CD8-positive, alpha-beta T cell (primary cell): ENCODE measurements at regions of chr4 and their contacts with region 1.

Region 1: GRCh38 chr4:87465739-87466366 is 43.5 kb downstream of the NUDT9 start:
- DNase-seq: peak in 3 of 9 experiments; percentile 7 to 69 (median 58)
- ATAC-seq: peak; percentile 48
- H3K4me3 ChIP-seq: no peak overlapping the region
- H3K4me3 Mint-ChIP-seq: no peak overlapping the region
- H3K27ac ChIP-seq: no peak overlapping the region
- H3K27ac Mint-ChIP-seq: no peak overlapping the region
- H3K4me1 ChIP-seq: no peaks in the 10 kb centered on the region
- H3K4me1 Mint-ChIP-seq: no peaks in the 10 kb centered on the region
- H3K27me3 ChIP-seq: no peaks in the 10 kb centered on the region
- H3K27me3 Mint-ChIP-seq: no peaks in the 10 kb centered on the region
- CTCF ChIP-seq: peak; percentile 82

Region 2: DNA sequence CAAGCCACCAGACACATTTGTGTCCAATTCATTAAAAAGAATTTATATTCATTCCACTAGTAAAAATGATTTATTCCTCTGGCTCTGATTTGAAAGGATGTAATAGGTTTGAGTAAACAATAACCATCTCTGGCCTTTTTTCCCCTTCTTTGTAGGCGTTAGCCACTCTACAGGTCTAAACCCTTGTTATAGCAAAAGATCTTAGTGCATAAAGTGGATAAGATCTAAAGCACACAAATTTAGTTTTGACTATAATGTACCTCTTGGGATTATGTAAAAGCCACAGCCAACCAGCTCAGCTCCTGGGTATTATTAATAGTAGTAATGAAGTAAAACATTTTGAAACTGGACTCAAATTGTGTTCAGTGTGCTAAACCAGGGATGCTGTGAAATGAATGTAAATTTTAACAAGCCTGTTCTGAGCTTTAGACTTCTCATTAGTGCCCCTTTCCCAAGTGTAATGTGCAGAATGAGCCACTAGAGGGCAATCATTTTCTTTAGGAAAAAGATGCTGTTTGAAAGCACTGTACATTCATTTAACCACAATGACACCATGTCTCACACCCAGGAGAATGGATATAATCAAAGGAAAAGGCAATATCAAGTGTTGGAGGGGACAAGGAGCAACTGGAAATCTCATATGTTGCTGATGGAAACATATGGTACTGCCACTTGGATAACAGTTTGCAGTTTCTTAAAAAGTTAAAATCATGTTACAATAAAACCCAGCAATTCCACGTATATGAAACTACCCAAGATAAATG is 315.2 kb before region 1 on chr4:
- CTCF ChIA-PET with region 1: interaction called, 6 read pairs
- POLR2A ChIA-PET with region 1: no interaction called
- intact Hi-C with region 1: loop called (anchors 1 to 2 kb)
- DNase-seq: peak in 8 of 9 experiments; percentile 17 to 78 (median 40)
- ATAC-seq: peak; percentile 84
- H3K4me3 ChIP-seq: no peak overlapping the region
- H3K4me3 Mint-ChIP-seq: no peak overlapping the region
- H3K27ac ChIP-seq: no peak overlapping the region
- H3K27ac Mint-ChIP-seq: no peak overlapping the region
- H3K4me1 ChIP-seq: no peaks in the 10 kb centered on the region
- H3K4me1 Mint-ChIP-seq: no peaks in the 10 kb centered on the region
- H3K27me3 ChIP-seq: no peaks in the 10 kb centered on the region
- H3K27me3 Mint-ChIP-seq: no peaks in the 10 kb centered on the region
- CTCF ChIP-seq: peak; percentile 91

Region 3: DNA sequence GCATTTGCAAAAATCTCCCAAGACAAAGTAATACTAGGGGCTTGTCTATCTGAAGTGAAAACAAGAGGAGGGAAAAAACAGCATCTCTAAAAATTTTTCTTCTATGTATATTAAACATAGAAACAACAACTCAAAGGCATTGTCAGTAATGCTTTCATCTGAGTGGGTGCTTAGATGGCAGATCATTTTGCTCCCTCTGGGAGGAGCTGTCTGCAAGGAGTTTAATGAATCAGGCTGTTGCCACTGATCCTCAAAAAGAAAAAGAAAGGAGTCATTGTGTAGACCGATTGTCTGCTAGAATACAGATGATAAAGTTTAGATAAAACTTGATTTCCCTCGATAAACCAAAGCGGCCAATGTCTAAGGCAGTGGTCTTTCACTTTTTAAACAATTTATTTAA is 195.7 kb before region 1 on chr4:
- CTCF ChIA-PET with region 1: interaction called, 6 read pairs
- POLR2A ChIA-PET with region 1: no interaction called
- intact Hi-C with region 1: loop called (anchors 1 to 5 kb)
- DNase-seq: peak in 2 of 9 experiments; percentile 3 to 20
- ATAC-seq: no peak
- H3K4me3 ChIP-seq: no peak overlapping the region
- H3K4me3 Mint-ChIP-seq: no peak overlapping the region
- H3K27ac ChIP-seq: no peak overlapping the region
- H3K27ac Mint-ChIP-seq: no peak overlapping the region
- H3K4me1 ChIP-seq: no peaks in the 10 kb centered on the region
- H3K4me1 Mint-ChIP-seq: no peaks in the 10 kb centered on the region
- H3K27me3 ChIP-seq: no peaks in the 10 kb centered on the region
- H3K27me3 Mint-ChIP-seq: peaks cover 9% of the 10 kb centered on the region
- CTCF ChIP-seq: no peak

Region 4: GRCh38 chr4:87353592-87353991 is 112.3 kb before region 1 on chr4:
- CTCF ChIA-PET with region 1: interaction called, 9 read pairs
- POLR2A ChIA-PET with region 1: no interaction called
- intact Hi-C with region 1: loop called (anchors 5 kb)
- DNase-seq: peak in 7 of 9 experiments; percentile 4 to 61 (median 53)
- ATAC-seq: no peak
- H3K4me3 ChIP-seq: no peak overlapping the region
- H3K4me3 Mint-ChIP-seq: no peak overlapping the region
- H3K27ac ChIP-seq: no peak overlapping the region
- H3K27ac Mint-ChIP-seq: no peak overlapping the region
- H3K4me1 ChIP-seq: no peaks in the 10 kb centered on the region
- H3K4me1 Mint-ChIP-seq: no peaks in the 10 kb centered on the region
- H3K27me3 ChIP-seq: no peaks in the 10 kb centered on the region
- H3K27me3 Mint-ChIP-seq: no peaks in the 10 kb centered on the region
- CTCF ChIP-seq: peak; percentile 62

Region 5: GRCh38 chr4:87375719-87376291 is 90.0 kb before region 1 on chr4:
- CTCF ChIA-PET with region 1: interaction called, 120 read pairs
- POLR2A ChIA-PET with region 1: no interaction called
- intact Hi-C with region 1: loop called (anchors 1 kb)
- DNase-seq: peak in 2 of 9 experiments; percentile 51 to 66
- ATAC-seq: peak; percentile 63
- H3K4me3 ChIP-seq: no peak overlapping the region
- H3K4me3 Mint-ChIP-seq: no peak overlapping the region
- H3K27ac ChIP-seq: no peak overlapping the region
- H3K27ac Mint-ChIP-seq: no peak overlapping the region
- H3K4me1 ChIP-seq: no peaks in the 10 kb centered on the region
- H3K4me1 Mint-ChIP-seq: peaks cover 5% of the 10 kb centered on the region
- H3K27me3 ChIP-seq: no peaks in the 10 kb centered on the region
- H3K27me3 Mint-ChIP-seq: no peaks in the 10 kb centered on the region
- CTCF ChIP-seq: peak; percentile 76